Right ventricle myocardium inferior (tissue), 1 donor: ENCODE measurements at regions of chr20 and their contacts with region 1.

Region 1: GRCh38 chr20:59850018-59850641 is 83.3 kb downstream of the SYCP2 start:
- DNase-seq: no peak
- ATAC-seq: no peak

Region 2: DNA sequence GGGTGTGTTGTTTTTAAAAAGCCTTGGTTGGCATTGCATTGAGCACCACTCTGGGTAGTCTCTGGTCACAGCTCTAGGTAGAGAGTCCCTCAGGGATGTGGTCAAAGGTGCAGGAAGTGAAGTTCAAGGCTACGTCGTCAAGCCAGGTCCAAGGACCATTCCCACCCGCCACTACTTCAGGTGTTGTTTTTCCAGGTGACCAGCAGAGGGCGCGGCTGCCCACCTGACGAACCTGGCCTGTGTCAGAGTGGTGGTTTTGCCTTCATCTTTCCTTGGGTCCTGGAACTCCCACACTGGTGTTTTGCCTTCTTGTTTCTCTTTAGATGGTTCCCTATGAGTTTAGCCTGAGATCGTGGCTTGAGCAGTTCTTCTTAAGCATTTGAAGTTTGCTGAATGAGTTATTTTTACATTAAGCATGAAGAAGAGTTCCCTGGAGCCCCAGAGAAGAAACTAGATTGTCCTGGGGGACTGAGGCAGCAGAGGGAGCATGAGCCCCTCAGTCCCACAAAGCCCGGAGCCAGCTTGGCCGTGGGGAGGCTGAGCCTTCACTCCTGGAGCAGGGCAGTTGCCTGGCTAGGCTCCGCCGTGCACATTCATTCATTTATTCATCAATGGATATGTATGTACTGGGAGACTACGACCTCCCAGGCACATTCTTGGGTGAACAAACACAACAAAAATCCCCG is 251.4 kb before region 1 on chr20:
- intact Hi-C with region 1: loop called (anchors 10 kb)
- DNase-seq: no peak
- ATAC-seq: peak; percentile 47

Region 3: GRCh38 chr20:59782986-59783640 is 67.0 kb before region 1 on chr20:
- intact Hi-C with region 1: loop called (anchors 1 kb)
- DNase-seq: no peak
- ATAC-seq: peak; percentile 38